ENCODE measurements at regions of chr16 and their contacts with region 1.

Region 1: GRCh38 chr16:81901483-81901882 is 109.8 kb downstream of the SDR42E1 start:
- DNase-seq: peak; percentile 97
- H3K4me3 ChIP-seq: peak overlapping the region in 1 of 3 experiments; percentile 4
- H3K27ac ChIP-seq: peak overlapping the region; percentile 88
- H3K4me1 ChIP-seq: peaks cover 31% of the 10 kb centered on the region
- H3K27me3 ChIP-seq: no peaks in the 10 kb centered on the region
- CTCF ChIP-seq: no peak
- POLR2A ChIP-seq: peak; percentile 57

Region 2: DNA sequence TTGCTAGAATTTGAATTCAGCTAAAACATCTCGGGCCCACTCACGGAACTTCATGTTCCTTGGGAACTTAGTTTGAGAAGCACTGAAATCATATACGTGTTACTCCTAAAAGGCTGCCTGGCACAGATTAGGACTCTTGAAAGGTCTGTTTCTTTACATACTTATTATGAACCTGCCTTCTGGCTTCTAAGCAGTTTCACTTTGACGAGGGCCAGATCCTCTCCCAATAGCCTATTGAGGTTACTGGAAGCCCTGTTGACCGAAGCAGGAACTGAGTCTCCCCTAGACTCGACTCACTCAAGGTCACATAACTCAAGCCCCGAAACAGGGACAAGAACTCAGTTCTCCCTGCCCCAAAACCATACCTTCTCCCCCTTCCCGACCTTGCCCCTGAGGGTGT is 244.3 kb before region 1 on chr16:
- CTCF ChIA-PET with region 1: no interaction called
- POLR2A ChIA-PET with region 1: no interaction called
- dilution Hi-C with region 1: no loop called
- intact Hi-C with region 1: no loop called
- DNase-seq: no peak
- H3K4me3 ChIP-seq: no peak overlapping the region
- H3K27ac ChIP-seq: no peak overlapping the region
- H3K4me1 ChIP-seq: no peaks in the 10 kb centered on the region
- H3K27me3 ChIP-seq: no peaks in the 10 kb centered on the region
- CTCF ChIP-seq: no peak
- POLR2A ChIP-seq: no peak

Region 3: DNA sequence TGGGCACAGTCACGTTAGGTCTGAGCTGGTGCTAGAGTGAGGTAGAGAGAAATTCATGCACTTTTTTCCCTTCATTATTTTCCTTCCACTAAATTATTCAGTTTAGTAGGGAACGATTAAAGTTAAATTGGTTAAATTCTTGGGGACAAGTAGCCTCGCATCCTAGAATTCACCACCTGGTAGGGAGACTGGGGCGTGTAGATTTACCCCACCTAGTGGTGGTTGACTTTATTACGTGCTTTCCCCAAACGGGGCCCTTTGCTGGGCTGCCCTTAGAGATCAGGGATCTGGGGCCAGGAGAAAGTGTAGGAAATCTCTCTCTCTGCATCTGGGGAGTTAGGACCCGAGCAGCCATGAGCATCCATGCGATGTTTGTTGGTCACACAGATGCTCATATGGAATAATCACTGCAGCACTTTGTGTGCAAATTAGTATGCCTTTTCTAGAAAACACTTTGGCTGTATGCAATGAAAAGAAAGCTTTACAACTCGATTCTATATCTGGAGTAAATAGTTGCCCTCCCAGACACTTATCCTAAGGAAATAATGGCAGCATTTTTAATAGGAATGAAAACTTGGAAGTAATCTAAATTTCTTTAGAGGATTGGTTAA is 15.4 kb before region 1 on chr16:
- CTCF ChIA-PET with region 1: interaction called, 15 read pairs
- POLR2A ChIA-PET with region 1: no interaction called
- dilution Hi-C with region 1: no loop called
- intact Hi-C with region 1: loop called (anchors 1 kb)
- DNase-seq: peak; percentile 40
- H3K4me3 ChIP-seq: no peak overlapping the region
- H3K27ac ChIP-seq: no peak overlapping the region
- H3K4me1 ChIP-seq: no peaks in the 10 kb centered on the region
- H3K27me3 ChIP-seq: no peaks in the 10 kb centered on the region
- CTCF ChIP-seq: peak; percentile 73 to 78
- POLR2A ChIP-seq: no peak

Region 4: GRCh38 chr16:82004631-82005490 is 103.4 kb after region 1 on chr16:
- CTCF ChIA-PET with region 1: no interaction called
- POLR2A ChIA-PET with region 1: no interaction called
- dilution Hi-C with region 1: no loop called
- intact Hi-C with region 1: loop called (anchors 2 kb)
- DNase-seq: peak; percentile 44
- H3K4me3 ChIP-seq: no peak overlapping the region
- H3K27ac ChIP-seq: peak overlapping the region; percentile 5
- H3K4me1 ChIP-seq: peaks cover 12% of the 10 kb centered on the region
- H3K27me3 ChIP-seq: no peaks in the 10 kb centered on the region
- CTCF ChIP-seq: no peak
- POLR2A ChIP-seq: no peak

Region 5: GRCh38 chr16:82192665-82193064 is 291.2 kb after region 1 on chr16:
- CTCF ChIA-PET with region 1: no interaction called
- POLR2A ChIA-PET with region 1: no interaction called
- dilution Hi-C with region 1: no loop called
- intact Hi-C with region 1: loop called (anchors 1 kb)
- DNase-seq: peak; percentile 86
- H3K4me3 ChIP-seq: no peak overlapping the region
- H3K27ac ChIP-seq: peak overlapping the region; percentile 59
- H3K4me1 ChIP-seq: peaks cover 30% of the 10 kb centered on the region
- H3K27me3 ChIP-seq: no peaks in the 10 kb centered on the region
- CTCF ChIP-seq: no peak
- POLR2A ChIP-seq: peak; percentile 56

Measured in endothelial cell of umbilical vein (primary cell).